ENCODE measurements at regions of chr1 and their contacts with region 1.

Region 1: GRCh38 chr1:161473363-161473762 is 31.9 kb upstream of the FCGR2A start:
- DNase-seq: peak in 1 of 4 experiments; percentile 48
- ATAC-seq: no peak
- H3K4me3 ChIP-seq: no peak overlapping the region
- H3K27ac ChIP-seq: no peak overlapping the region
- H3K4me1 ChIP-seq: peaks cover 0 to 4% of the 10 kb centered on the region in 2 experiments; a peak in 2 of 5 replicates
- H3K27me3 ChIP-seq: no peaks in the 10 kb centered on the region
- CTCF ChIP-seq: no peak
- EP300 ChIP-seq: no peak
- POLR2A ChIP-seq: no peak
- RAD21 ChIP-seq: no peak

Region 2: DNA sequence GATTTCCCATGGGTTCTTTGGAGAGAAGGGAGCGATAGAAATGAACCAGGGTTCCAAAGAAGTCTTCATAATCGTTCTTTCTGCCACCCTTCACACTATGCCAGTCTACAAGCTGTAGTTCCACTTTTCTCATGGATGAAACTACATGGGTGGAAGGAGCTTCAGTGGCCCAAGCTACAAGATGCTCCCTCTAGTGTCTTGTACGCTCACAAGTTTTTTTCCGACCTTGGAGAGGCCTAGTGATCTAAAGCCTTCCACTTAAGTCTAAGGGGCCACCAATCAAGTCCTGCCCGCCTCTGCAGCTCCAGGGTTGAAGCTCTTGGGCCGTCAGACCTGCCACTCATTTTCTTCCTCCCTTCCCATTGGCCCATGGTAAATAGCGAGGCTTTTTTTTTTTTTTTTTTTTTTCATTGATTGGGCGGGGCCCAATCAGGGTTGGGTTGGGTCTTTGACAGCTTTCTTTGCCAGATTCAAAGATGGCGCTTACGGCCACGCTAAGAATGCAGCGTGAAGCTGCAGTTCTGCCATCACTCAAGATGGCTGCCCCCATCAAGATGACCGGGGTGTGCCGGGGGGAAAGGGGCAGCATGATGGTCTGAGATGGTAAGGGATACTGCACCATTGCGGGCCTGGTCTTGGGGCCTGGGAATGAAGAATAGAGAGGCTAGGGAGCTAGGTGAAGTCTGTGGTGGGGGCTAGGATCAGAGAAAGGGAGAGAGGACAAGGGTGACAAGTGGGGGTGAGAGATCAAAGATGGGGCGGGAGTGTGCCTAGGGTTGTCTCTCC is 247.6 kb before region 1 on chr1 and contains the start of gene TOMM40L:
- CTCF ChIA-PET with region 1: no interaction called
- POLR2A ChIA-PET with region 1: no interaction called
- in situ Hi-C with region 1: no loop called
- intact Hi-C with region 1: no loop called
- DNase-seq: peak; percentile 93 to 98 (median 95)
- ATAC-seq: peak; percentile 95
- H3K4me3 ChIP-seq: peak within 1 kb of the TSS; percentile 70
- H3K27ac ChIP-seq: peak within 1 kb of the TSS; percentile 79
- H3K4me1 ChIP-seq: peaks cover 15 to 17% of the 10 kb centered on the region in 2 experiments; a peak in 3 of 5 replicates
- H3K27me3 ChIP-seq: no peaks in the 10 kb centered on the region
- CTCF ChIP-seq: peak; percentile 72 to 88 (median 84)
- EP300 ChIP-seq: no peak
- POLR2A ChIP-seq: peak; percentile 87
- RAD21 ChIP-seq: peak; percentile 65 to 82
- polyA plus RNA-seq, gene TOMM40L: 9.6 to 12.9 TPM

Region 3: GRCh38 chr1:162023547-162024501 is 550.5 kb after region 1 on chr1 and contains the start of gene OLFML2B:
- CTCF ChIA-PET with region 1: no interaction called
- POLR2A ChIA-PET with region 1: no interaction called
- in situ Hi-C with region 1: loop called (anchors 25 kb)
- intact Hi-C with region 1: no loop called
- DNase-seq: peak; percentile 36 to 59 (median 52)
- ATAC-seq: peak; percentile 90
- H3K4me3 ChIP-seq: peak within 1 kb of the TSS; percentile 40
- H3K27ac ChIP-seq: no peak within 1 kb of the TSS; the same call in 2 of the 3 replicates
- H3K4me1 ChIP-seq: peaks cover 4 to 11% of the 10 kb centered on the region in 2 experiments; a peak in 4 of 5 replicates
- H3K27me3 ChIP-seq: peaks cover 49 to 63% of the 10 kb centered on the region in 2 experiments; a peak in 4 of 5 replicates
- CTCF ChIP-seq: peak; percentile 11 to 41 (median 26); a peak in 2 of 6 replicates
- EP300 ChIP-seq: no peak
- POLR2A ChIP-seq: no peak
- RAD21 ChIP-seq: peak; percentile 35 to 36; a peak in 3 of 4 replicates
- polyA plus RNA-seq, gene OLFML2B: not detected

Measured in K562 (cell line).